ENCODE measurements at regions of chr6 and their contacts with region 1.

Region 1: GRCh38 chr6:131627724-131628682 is at the start of gene MED23:
- DNase-seq: peak; percentile 97
- ATAC-seq: peak; percentile 87
- H3K4me3 Mint-ChIP-seq: peak within 1 kb of the TSS; percentile 86
- H3K27ac Mint-ChIP-seq: peak within 1 kb of the TSS; percentile 92
- H3K4me1 Mint-ChIP-seq: peaks cover 27% of the 10 kb centered on the region
- H3K27me3 Mint-ChIP-seq: no peaks in the 10 kb centered on the region
- total RNA-seq, gene MED23: 23.9 to 26.0 TPM

Region 2: DNA sequence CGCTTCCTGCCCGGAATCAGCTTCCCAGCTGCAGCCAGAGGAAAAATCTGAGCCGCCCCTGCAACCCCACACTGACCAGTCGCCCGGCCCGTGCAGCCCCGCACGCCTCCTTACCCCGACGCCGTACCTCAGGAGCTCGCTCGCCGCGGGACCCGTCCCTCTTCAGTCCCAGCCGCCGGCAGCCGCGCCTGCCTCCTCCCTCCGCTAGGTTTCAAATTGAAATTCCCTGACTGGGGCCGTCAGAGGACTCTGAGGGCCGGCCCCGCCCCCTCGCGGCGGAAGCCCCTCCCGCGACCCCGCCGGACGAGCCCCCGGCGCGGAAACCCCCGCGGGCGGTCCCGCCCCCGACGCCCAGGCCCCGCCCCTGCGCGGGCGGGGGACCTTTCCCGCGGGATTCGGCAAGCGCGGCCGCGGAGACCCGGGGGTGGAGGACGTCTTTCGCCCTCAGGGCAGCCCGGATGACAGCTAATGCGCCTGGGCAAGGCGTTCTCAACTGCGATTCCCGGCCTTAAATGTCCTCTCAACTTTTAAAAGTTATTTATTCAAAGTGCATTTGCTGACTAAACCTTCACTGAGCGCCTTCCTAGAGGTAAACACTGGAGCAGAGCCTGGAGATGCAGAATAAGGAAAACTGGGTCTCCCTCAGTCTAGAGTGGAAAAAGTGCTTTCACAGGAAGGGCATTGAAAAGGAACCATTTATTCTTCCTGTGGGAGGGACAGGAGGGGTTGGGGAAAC is 564.8 kb before region 1 on chr6 and contains the start of gene EPB41L2:
- CTCF ChIA-PET with region 1: no interaction called
- POLR2A ChIA-PET with region 1: no interaction called
- intact Hi-C with region 1: loop called in 1 of 2 experiments (anchors 2 kb)
- DNase-seq: peak; percentile 86
- ATAC-seq: peak; percentile 90
- H3K4me3 Mint-ChIP-seq: peak within 1 kb of the TSS; percentile 78
- H3K27ac Mint-ChIP-seq: peak within 1 kb of the TSS; percentile 76
- H3K4me1 Mint-ChIP-seq: peaks cover 28% of the 10 kb centered on the region
- H3K27me3 Mint-ChIP-seq: no peaks in the 10 kb centered on the region
- total RNA-seq, gene EPB41L2: 33.3 to 43.4 TPM

Region 3: GRCh38 chr6:131199568-131200272 is 428.3 kb before region 1 on chr6:
- CTCF ChIA-PET with region 1: interaction called, 4 read pairs
- POLR2A ChIA-PET with region 1: no interaction called
- intact Hi-C with region 1: loop called (anchors 1 to 5 kb)
- DNase-seq: peak; percentile 79
- ATAC-seq: peak; percentile 94
- H3K4me3 Mint-ChIP-seq: peak overlapping the region; percentile 69
- H3K27ac Mint-ChIP-seq: peak overlapping the region; percentile 90
- H3K4me1 Mint-ChIP-seq: peaks cover 55% of the 10 kb centered on the region
- H3K27me3 Mint-ChIP-seq: no peaks in the 10 kb centered on the region

Region 4: DNA sequence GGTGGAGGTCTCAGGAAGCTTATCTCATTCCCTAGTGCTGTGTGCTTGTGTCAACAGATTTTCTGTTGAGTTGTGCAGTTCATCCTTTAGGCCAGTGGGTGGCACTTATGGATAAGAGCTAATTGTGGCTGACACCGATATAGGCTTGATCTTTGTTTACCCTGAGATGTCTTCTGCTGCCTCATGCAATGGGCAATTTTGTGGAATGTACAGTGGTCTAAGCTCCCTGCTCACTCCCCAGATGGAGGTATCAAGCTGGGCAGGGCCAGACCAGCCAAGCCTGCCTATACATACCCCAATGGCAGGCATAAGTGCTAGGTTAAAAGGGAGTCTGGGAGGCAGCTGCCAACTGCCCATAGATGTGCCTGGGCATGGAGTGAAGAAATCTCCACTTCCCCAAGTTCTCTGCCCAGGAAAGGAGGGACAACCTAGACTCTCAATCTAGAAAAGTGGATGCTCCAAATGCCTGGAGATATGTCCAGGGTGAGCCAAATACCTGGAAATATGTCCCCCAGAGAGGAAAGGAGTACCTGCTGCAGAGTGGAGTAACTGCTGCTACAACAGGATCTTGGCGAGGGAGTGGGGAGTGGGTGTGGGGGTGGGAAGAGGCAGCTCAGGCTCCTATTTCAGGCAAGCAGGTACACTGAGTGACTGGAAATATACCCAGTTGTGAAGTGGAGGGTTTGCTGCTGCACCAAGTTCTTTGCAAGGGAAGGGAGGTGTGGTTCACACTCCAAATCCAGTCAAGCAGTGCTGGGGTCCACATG is 108.2 kb before region 1 on chr6:
- CTCF ChIA-PET with region 1: interaction called, 4 read pairs
- POLR2A ChIA-PET with region 1: no interaction called
- intact Hi-C with region 1: loop called (anchors 1 kb)
- DNase-seq: peak; percentile 65
- ATAC-seq: peak; percentile 94
- H3K4me3 Mint-ChIP-seq: no peak overlapping the region
- H3K27ac Mint-ChIP-seq: no peak overlapping the region
- H3K4me1 Mint-ChIP-seq: peaks cover 9% of the 10 kb centered on the region
- H3K27me3 Mint-ChIP-seq: no peaks in the 10 kb centered on the region

Region 5: DNA sequence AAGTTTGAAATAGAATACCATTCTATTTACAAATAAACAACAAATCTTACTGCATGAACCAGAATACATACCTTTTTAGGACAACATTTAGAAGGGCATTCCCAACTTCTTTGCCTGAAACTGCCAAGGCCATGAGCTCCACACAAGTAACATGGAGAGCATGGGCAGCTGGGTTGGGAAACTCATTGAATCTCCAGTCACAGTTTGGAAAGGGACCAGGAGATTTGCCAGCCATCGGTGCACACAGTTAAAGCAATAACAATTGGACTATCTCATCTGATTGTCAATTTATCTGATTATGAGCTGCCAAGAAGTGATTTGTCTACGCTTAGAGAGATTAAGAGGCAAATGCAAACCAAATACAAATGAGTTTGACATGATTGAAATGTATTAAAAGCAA is 35.1 kb before region 1 on chr6:
- CTCF ChIA-PET with region 1: interaction called, 11 read pairs
- POLR2A ChIA-PET with region 1: no interaction called
- intact Hi-C with region 1: no loop called
- DNase-seq: no peak
- ATAC-seq: no peak
- H3K4me3 Mint-ChIP-seq: no peak overlapping the region
- H3K27ac Mint-ChIP-seq: no peak overlapping the region
- H3K4me1 Mint-ChIP-seq: peaks cover 2% of the 10 kb centered on the region
- H3K27me3 Mint-ChIP-seq: no peaks in the 10 kb centered on the region

Region 6: DNA sequence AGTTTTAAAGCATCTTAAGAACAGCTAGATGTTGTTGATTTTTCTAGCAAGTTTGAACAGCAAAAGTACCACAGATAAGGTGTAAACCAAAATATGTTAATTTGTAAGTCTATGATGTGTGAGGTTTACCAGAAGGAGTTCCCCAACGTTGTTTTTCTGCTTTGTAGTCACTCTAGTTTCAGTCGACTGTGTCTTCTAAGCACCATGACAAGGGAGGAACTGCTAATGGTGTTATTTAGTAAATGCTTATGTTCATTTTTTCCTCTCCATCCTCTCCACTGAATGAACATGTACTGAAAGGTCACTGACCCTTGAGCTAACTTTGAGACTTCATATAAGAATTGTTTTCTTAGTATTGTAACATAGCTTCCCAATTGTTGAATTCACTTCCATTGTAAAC is 12.1 kb after region 1 on chr6:
- CTCF ChIA-PET with region 1: interaction called, 24 read pairs
- POLR2A ChIA-PET with region 1: no interaction called
- intact Hi-C with region 1: no loop called
- DNase-seq: no peak
- ATAC-seq: peak; percentile 88
- H3K4me3 Mint-ChIP-seq: no peak overlapping the region
- H3K27ac Mint-ChIP-seq: no peak overlapping the region
- H3K4me1 Mint-ChIP-seq: no peaks in the 10 kb centered on the region
- H3K27me3 Mint-ChIP-seq: no peaks in the 10 kb centered on the region

Region 7: DNA sequence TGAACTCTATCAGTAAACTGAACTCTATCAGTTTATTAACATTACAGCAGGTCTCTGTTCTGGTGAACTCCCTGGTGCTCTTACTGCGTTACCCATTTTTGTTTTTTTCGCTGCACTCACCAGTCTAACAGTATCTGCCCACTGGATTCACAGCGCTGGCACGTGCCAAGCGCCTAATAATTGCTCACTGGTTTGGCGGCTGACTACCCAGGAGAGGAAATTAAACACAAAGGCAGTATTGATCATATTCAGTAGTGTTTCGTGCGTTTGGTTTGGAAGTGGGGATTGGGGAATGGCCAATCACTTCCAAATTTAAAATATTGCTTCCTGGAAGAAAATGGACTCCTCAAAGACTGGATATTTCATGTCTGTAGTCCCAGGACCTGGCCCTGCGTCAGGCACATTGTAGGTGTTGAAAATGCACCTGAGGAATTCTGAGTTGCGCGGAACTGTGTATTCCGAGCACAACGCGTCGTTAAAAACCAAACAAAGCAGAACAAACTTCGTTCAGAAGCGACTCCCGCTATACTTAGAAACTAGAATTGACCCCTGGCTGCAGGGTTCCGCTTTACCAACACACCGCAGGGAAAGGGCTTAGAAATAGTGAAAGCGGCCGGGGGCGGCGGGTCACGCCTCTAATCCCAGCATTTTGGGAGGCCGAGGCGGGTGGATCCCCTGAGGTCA is 1185.3 kb after region 1 on chr6:
- CTCF ChIA-PET with region 1: no interaction called
- POLR2A ChIA-PET with region 1: no interaction called
- intact Hi-C with region 1: loop called in 1 of 2 experiments (anchors 5 kb)
- DNase-seq: peak; percentile 64
- ATAC-seq: peak; percentile 23
- H3K4me3 Mint-ChIP-seq: peak overlapping the region; percentile 89
- H3K27ac Mint-ChIP-seq: peak overlapping the region; percentile 99
- H3K4me1 Mint-ChIP-seq: peaks cover 30% of the 10 kb centered on the region
- H3K27me3 Mint-ChIP-seq: no peaks in the 10 kb centered on the region

Region 8: GRCh38 chr6:133326584-133326983 is 1698.6 kb after region 1 on chr6:
- CTCF ChIA-PET with region 1: no interaction called
- POLR2A ChIA-PET with region 1: no interaction called
- intact Hi-C with region 1: no loop called
- DNase-seq: no peak
- ATAC-seq: no peak
- H3K4me3 Mint-ChIP-seq: no peak overlapping the region
- H3K27ac Mint-ChIP-seq: no peak overlapping the region
- H3K4me1 Mint-ChIP-seq: no peaks in the 10 kb centered on the region
- H3K27me3 Mint-ChIP-seq: peaks cover 2% of the 10 kb centered on the region